Common myeloid progenitor, CD34-positive (primary cell): ENCODE measurements at regions of chr1 and their contacts with region 1.

Region 1: DNA sequence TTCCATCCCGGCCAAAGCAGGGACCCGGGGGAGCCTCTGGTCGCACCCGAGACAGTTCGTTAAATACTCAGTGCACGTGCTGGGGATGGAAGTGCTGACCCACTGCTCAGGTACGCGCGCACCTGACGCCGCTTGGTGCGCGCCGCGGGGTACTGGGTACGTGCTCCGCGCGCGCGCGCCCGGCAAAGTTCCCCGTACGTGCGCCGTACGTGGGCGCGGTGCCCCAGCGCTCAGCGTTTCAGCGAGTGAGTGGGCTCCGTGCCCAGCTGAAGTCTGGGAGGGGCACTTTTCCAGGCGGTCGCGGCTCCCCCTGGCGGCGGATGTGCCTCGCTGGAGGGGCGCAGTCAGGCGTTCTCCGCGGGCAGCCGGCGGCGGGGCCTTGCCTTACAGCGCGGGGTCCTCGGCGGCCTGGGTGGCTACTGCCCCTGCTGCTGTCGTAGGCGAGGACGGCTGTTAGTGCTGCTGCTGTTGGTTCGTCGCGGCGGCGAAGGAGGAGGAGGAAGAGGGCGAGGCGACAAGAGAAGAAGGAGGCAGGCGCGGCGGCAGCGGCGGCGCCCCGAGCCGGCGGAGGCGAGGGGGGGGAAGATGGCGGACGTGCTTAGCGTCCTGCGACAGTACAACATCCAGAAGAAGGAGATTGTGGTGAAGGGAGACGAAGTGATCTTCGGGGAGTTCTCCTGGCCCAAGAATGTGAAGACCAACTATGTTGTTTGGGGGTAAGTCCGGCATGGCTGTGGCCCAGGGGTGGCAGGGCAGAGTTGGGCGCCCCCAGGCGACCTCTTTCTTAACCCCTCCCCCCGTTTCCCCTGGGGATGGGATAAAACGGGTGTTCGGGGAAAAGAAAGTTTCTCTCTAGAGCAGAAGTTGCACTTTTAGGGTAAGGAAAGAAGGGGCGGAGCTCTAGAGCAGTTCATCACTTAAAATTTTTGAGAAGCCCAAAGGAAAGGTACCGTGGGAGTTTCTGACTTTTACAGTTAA is at the start of gene CDC73:
- DNase-seq: peak; percentile 98 to 99 (median 99)
- H3K4me3 ChIP-seq: peak within 1 kb of the TSS; percentile 86 to 99 (median 97)
- H3K27ac ChIP-seq: peak within 1 kb of the TSS; percentile 96 to 97
- H3K4me1 ChIP-seq: peaks cover 10 to 28% (median 14%) of the 10 kb centered on the region in 4 experiments
- H3K27me3 ChIP-seq: no peaks in the 10 kb centered on the region

Region 2: DNA sequence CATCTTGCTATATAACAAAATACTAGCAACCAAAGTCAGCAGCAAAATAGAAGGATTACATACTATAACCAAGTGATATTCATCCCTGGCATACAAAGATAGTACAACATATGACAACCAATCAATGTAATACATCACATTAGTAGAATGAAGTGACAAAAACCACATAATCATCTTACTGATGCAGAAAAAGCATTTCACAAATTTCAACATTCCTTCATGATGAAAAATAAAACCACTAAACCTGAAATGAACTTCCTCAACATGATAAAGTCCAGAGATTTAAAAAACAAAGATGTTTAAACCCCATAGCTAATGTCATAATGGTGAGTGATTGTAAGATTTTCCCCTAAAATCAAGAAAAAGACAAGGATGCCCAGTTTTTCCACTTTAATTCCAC is 43.9 kb before region 1 on chr1:
- CTCF ChIA-PET with region 1: no interaction called
- POLR2A ChIA-PET with region 1: no interaction called
- DNase-seq: no peak
- H3K4me3 ChIP-seq: no peak overlapping the region
- H3K27ac ChIP-seq: no peak overlapping the region
- H3K4me1 ChIP-seq: no peaks in the 10 kb centered on the region
- H3K27me3 ChIP-seq: no peaks in the 10 kb centered on the region

Region 3: GRCh38 chr1:193090865-193091264 is 31.0 kb before region 1 on chr1:
- CTCF ChIA-PET with region 1: no interaction called
- POLR2A ChIA-PET with region 1: no interaction called
- DNase-seq: no peak
- H3K4me3 ChIP-seq: no peak overlapping the region
- H3K27ac ChIP-seq: no peak overlapping the region
- H3K4me1 ChIP-seq: no peaks in the 10 kb centered on the region
- H3K27me3 ChIP-seq: no peaks in the 10 kb centered on the region

Region 4: GRCh38 chr1:193103759-193104495 is 18.0 kb before region 1 on chr1:
- CTCF ChIA-PET with region 1: interaction called, 11 read pairs
- POLR2A ChIA-PET with region 1: interaction called, 7 read pairs
- DNase-seq: no peak
- H3K4me3 ChIP-seq: peak overlapping the region; percentile 60 to 98 (median 87)
- H3K27ac ChIP-seq: peak overlapping the region; percentile 47 to 85
- H3K4me1 ChIP-seq: peaks cover 10 to 18% (median 14%) of the 10 kb centered on the region in 4 experiments
- H3K27me3 ChIP-seq: no peaks in the 10 kb centered on the region

Region 5: DNA sequence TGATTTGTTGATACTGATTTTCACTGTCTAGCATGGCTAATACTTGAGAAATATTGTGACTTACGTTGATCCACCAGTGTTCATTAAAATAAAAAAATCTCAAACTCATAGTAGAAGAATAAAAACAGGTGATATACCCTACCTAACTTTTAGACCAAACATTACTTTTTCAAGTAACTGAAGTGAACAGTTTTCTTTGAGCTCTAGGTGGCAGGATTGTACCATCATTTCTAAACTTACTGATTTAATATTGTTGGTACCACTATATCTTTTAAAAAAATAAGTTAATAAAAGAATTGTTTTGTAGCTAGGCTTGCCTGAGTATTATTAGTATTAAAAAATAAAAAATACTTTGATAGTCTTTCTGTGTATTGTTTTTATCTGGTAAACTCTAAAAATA is 21.4 kb after region 1 on chr1:
- CTCF ChIA-PET with region 1: interaction called, 10 read pairs
- POLR2A ChIA-PET with region 1: no interaction called
- DNase-seq: peak; percentile 12 to 37 (median 34)
- H3K4me3 ChIP-seq: no peak overlapping the region
- H3K27ac ChIP-seq: no peak overlapping the region
- H3K4me1 ChIP-seq: no peaks in the 10 kb centered on the region
- H3K27me3 ChIP-seq: no peaks in the 10 kb centered on the region